ENCODE measurements at regions of chrX and their contacts with region 1.

Region 1: DNA sequence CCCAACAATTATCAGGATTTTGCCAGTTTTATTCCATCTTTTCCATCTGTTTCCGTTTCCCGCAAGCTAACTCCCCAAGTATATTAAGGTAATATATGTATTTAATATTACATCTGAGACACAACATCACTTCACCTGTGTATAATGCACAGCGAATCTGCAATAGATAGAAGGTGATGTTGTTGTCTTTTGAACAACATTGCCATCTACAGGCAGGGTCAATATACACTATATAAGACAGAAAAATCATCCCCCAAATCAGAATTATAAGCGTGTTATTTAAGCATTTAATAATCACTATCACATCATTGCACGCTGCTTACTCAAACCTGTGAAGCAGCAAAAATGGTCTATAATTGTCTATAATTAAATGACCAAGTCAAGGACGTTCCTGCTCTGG is 1115.5 kb downstream of the NLGN4X start:
- DNase-seq: no peak
- H3K4me3 ChIP-seq: no peak overlapping the region
- H3K27ac ChIP-seq: no peak overlapping the region
- H3K27me3 ChIP-seq: peaks cover 0 to 5% (median 0%) of the 10 kb centered on the region in 45 donors
- CTCF ChIP-seq: peak in 45 of 56 donors; percentile 20 to 72 (median 46)

Region 2: GRCh38 chrX:4547213-4547836 is 565.8 kb before region 1 on chrX:
- intact Hi-C with region 1: loop called (anchors 2 to 5 kb)
- DNase-seq: peak in 9 of 10 donors; percentile 38 to 79 (median 60)
- H3K4me3 ChIP-seq: no peak overlapping the region
- H3K27ac ChIP-seq: no peak overlapping the region
- H3K27me3 ChIP-seq: peaks cover 0 to 50% (median 3%) of the 10 kb centered on the region in 45 donors
- CTCF ChIP-seq: peak; percentile 70 to 99 (median 96)

Measured in dorsolateral prefrontal cortex (tissue), 120 donors.